ENCODE measurements at regions of chr4 and their contacts with region 1.

Region 1: GRCh38 chr4:80036949-80037685 is 35.9 kb downstream of the ANTXR2 start:
- DNase-seq: no peak
- ATAC-seq: no peak
- H3K4me3 Mint-ChIP-seq: peak overlapping the region; percentile 41
- H3K27ac Mint-ChIP-seq: peak overlapping the region; percentile 84
- H3K4me1 Mint-ChIP-seq: peaks cover 21% of the 10 kb centered on the region
- H3K27me3 Mint-ChIP-seq: no peaks in the 10 kb centered on the region
- CTCF ChIP-seq: no peak

Region 2: DNA sequence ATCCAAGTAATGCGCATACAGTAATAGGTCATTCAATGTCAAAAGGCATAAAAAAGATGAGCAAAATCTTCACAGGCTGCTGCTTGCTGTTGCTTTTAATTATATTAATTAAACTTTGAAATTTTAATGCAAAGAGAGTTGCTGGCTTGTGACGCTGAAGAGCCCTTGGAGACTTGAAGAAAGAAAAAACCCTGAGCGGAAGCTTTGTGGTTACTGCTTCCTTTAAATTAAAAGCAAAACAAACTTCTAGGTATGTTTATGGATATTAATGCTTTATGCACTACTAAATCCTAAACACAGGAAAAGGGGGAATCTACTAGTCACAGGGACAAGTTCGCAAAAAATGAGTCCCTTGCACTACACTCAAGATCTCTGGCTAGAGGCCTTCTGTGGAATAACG is 130.8 kb before region 1 on chr4:
- CTCF ChIA-PET with region 1: no interaction called
- POLR2A ChIA-PET with region 1: no interaction called
- intact Hi-C with region 1: no loop called
- DNase-seq: no peak
- ATAC-seq: no peak
- H3K4me3 Mint-ChIP-seq: no peak overlapping the region
- H3K27ac Mint-ChIP-seq: no peak overlapping the region
- H3K4me1 Mint-ChIP-seq: peaks cover 21% of the 10 kb centered on the region
- H3K27me3 Mint-ChIP-seq: no peaks in the 10 kb centered on the region
- CTCF ChIP-seq: no peak

Region 3: DNA sequence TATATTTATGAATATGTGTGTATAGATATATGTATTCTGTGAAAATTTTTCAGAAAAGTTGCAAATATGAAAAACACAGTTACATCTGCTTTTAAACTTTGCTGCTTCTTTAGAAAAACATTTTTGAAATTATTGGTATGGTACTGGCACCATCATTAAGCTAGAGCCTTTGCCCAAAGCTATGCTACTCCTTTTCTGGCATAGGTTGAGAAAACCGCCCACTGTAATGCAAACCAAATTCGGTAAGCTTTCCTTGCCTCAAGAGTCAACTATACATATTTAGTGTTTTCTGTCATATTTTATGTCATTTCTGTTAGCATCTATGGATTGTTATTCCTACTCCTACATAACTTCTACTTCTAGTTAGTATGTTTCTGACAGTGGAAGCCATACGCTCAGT is 14.8 kb before region 1 on chr4:
- CTCF ChIA-PET with region 1: no interaction called
- POLR2A ChIA-PET with region 1: no interaction called
- intact Hi-C with region 1: loop called (anchors 2 kb)
- DNase-seq: no peak
- ATAC-seq: no peak
- H3K4me3 Mint-ChIP-seq: no peak overlapping the region
- H3K27ac Mint-ChIP-seq: no peak overlapping the region
- H3K4me1 Mint-ChIP-seq: peaks cover 3% of the 10 kb centered on the region
- H3K27me3 Mint-ChIP-seq: no peaks in the 10 kb centered on the region
- CTCF ChIP-seq: no peak

Region 4: GRCh38 chr4:80049813-80050534 is 12.9 kb after region 1 on chr4:
- CTCF ChIA-PET with region 1: no interaction called
- POLR2A ChIA-PET with region 1: no interaction called
- intact Hi-C with region 1: loop called (anchors 1 kb)
- DNase-seq: no peak
- ATAC-seq: no peak
- H3K4me3 Mint-ChIP-seq: no peak overlapping the region
- H3K27ac Mint-ChIP-seq: no peak overlapping the region
- H3K4me1 Mint-ChIP-seq: peaks cover 2% of the 10 kb centered on the region
- H3K27me3 Mint-ChIP-seq: no peaks in the 10 kb centered on the region
- CTCF ChIP-seq: no peak

Region 5: DNA sequence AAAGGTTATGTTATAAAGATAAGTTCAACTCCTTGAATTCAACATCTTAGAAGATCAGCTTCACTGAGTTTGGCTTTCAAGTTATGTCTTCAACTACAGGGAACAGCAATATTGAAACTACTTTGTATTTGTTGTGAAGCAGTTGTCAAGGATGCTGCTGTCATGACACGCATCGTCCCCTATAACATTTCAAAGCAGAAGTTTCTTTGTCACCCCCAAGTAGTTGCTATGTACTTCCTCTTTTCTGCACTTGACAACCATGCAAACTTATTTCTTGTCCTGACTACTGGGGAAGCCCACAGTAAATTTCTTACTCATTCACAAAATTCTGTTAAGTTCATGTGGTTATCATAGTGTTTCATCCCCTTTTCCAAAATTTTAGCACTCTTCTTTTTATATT is 21.6 kb after region 1 on chr4:
- CTCF ChIA-PET with region 1: no interaction called
- POLR2A ChIA-PET with region 1: interaction called, 5 read pairs
- intact Hi-C with region 1: loop called (anchors 1 kb)
- DNase-seq: no peak
- ATAC-seq: peak; percentile 89
- H3K4me3 Mint-ChIP-seq: peak overlapping the region; percentile 79
- H3K27ac Mint-ChIP-seq: peak overlapping the region; percentile 99
- H3K4me1 Mint-ChIP-seq: peaks cover 30% of the 10 kb centered on the region
- H3K27me3 Mint-ChIP-seq: no peaks in the 10 kb centered on the region
- CTCF ChIP-seq: no peak

Measured in activated B cell treated with CpG ODN at 0.5 μM for 24 hours (primary cell).